Posterior cingulate gyrus (tissue), 11 donors: ENCODE measurements at regions of chr7 and their contacts with region 1.

Region 1: GRCh38 chr7:157432957-157433576 is 96.3 kb downstream of the DNAJB6 start:
- DNase-seq: peak in 9 of 10 donors; percentile 34 to 92 (median 66)

Region 2: DNA sequence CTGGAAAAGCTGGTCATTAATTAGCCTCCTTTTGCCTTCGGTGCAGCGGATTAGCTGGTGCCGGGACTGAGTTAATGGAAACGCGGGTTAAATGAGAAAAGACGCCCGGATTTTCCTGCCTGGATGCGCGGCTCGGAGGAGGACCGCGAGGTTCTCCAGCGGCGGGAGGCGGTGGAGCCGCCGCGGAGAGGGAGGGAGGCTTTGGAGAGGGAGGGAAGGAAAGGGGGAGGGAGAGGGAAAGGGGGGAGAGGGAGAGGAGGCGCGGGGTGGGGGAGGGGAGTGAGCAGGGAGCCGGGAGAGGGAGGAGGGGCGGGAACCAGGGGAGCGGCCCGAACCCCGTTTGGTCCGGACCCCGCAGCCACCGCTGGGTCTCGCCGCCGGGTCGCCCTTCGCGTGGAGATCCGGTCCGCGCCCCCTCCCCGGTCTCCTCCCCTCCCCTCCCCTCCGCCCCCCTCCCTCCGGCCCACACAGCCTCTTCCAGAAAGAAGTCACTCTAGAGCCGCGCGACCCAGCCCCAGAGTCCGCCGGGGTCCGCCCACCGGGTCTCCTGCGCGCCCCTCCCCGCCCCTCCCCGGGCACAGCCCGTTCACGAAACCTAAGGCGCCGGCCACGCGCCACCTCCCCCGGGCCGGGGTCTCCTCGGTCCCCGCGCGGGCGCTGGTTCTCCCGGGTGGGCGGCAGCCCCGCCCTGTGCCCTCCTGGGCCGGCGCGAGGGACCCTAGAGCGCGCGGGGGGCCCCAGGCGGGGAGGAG is 251.3 kb after region 1 on chr7:
- intact Hi-C with region 1: loop called (anchors 10 kb)
- DNase-seq: peak in 5 of 10 donors; percentile 13 to 81 (median 74)

Region 3: GRCh38 chr7:157875230-157876179 is 442.4 kb after region 1 on chr7:
- intact Hi-C with region 1: loop called (anchors 2 kb)
- DNase-seq: peak in 5 of 10 donors; percentile 28 to 82 (median 63)

Region 4: GRCh38 chr7:158407581-158408317 is 974.7 kb after region 1 on chr7:
- intact Hi-C with region 1: loop called (anchors 2 kb)
- DNase-seq: peak in 3 of 10 donors; percentile 61 to 79 (median 75)